IMR-90 (cell line): ENCODE measurements at regions of chr2 and their contacts with region 1.

Region 1: GRCh38 chr2:192162392-192163042 is 32.2 kb downstream of the TMEFF2 start:
- DNase-seq: peak; percentile 74
- ATAC-seq: peak; percentile 93
- H3K4me3 ChIP-seq: no peak overlapping the region
- H3K27ac ChIP-seq: no peak overlapping the region
- H3K4me1 ChIP-seq: no peaks in the 10 kb centered on the region
- H3K27me3 ChIP-seq: no peaks in the 10 kb centered on the region
- CTCF ChIP-seq: peak; percentile 92
- POLR2A ChIP-seq: no peak; the same call in 1 of the 2 replicates
- RAD21 ChIP-seq: peak; percentile 95

Region 2: DNA sequence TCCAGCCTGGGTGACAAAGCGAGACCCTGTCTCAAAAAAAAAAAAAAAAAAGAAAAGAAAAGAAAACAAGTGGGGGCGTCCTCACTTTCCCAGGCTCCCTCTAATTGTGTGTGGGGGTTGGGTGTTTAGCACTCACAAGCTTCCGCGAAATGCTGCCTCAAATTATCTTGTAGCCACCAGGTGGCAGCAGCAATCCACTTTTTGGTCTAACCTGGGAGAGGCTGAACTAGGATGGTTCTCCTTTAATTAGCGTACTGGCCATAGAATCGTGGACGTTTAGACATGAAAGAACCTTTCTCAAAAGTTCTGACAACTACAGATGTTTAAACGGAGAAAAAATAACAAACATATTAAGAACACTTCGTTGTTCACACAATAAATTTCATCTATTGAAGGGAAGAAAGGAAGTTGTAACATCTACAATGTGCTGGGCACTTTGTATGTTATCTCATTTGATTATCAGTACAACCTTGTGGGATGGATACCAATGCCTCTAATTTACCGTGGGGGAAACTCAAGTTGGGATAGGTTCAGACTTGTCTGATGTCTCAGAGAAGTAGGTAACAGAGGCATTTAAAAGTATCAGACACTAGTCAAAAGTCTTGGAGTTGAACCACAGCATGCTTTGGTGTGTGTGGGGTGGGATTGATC is 607.3 kb before region 1 on chr2:
- CTCF ChIA-PET with region 1: interaction called, 3 read pairs
- POLR2A ChIA-PET with region 1: no interaction called
- dilution Hi-C with region 1: no loop called
- in situ Hi-C with region 1: no loop called
- intact Hi-C with region 1: loop called (anchors 1 kb)
- DNase-seq: peak; percentile 74
- ATAC-seq: peak; percentile 93
- H3K4me3 ChIP-seq: no peak overlapping the region
- H3K27ac ChIP-seq: no peak overlapping the region
- H3K4me1 ChIP-seq: no peaks in the 10 kb centered on the region
- H3K27me3 ChIP-seq: peaks cover 3% of the 10 kb centered on the region; the same call in 1 of the 2 replicates
- CTCF ChIP-seq: peak; percentile 86
- POLR2A ChIP-seq: no peak
- RAD21 ChIP-seq: peak; percentile 90

Region 3: GRCh38 chr2:191800874-191801273 is 361.6 kb before region 1 on chr2:
- CTCF ChIA-PET with region 1: interaction called, 11 read pairs
- POLR2A ChIA-PET with region 1: no interaction called
- dilution Hi-C with region 1: no loop called
- in situ Hi-C with region 1: no loop called
- intact Hi-C with region 1: no loop called
- DNase-seq: peak; percentile 20
- ATAC-seq: no peak
- H3K4me3 ChIP-seq: no peak overlapping the region
- H3K27ac ChIP-seq: no peak overlapping the region
- H3K4me1 ChIP-seq: no peaks in the 10 kb centered on the region
- H3K27me3 ChIP-seq: peaks cover 2% of the 10 kb centered on the region; the same call in 1 of the 2 replicates
- CTCF ChIP-seq: no peak
- POLR2A ChIP-seq: no peak
- RAD21 ChIP-seq: no peak

Region 4: DNA sequence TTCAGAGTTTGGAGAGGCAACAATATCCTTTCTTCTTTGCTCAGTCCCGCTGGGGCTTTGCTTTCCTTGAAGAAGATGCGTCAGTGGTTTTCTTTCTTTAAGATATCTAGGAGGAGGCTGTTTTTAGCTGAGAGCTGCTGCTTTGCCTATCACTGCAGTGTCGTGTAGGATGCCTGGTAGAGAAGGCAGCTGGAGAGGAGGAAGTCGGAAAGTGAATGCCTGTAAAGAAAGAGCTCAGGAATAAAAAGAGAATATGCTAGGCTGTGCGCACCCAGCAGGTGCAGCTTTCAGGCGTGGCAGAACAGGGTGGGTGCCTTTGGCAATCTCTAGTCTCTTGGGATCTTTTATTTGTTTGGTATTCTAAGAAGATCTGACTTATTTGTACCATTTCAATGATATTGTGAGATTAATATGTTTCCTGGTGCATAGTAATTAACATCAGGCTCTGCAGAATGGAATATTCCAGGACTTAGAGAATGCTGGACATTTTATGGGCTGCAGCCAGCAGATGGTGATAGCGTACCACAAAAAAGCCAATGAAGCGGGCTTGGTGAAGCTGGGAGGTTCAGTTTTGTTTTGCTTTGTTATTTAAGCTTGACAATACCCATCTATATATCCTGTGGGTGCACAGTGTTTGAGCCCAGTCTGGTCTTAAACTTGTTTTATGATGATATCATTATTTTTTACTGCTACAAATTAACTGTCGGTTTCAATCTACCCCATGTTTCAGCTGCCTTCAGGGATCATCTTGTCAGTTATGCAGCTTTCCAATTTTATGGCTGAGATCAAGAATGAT is 350.5 kb before region 1 on chr2:
- CTCF ChIA-PET with region 1: interaction called, 75 read pairs
- POLR2A ChIA-PET with region 1: interaction called, 7 read pairs
- dilution Hi-C with region 1: no loop called
- in situ Hi-C with region 1: loop called (anchors 5 kb)
- intact Hi-C with region 1: loop called (anchors 1 kb)
- DNase-seq: peak; percentile 69
- ATAC-seq: peak; percentile 97
- H3K4me3 ChIP-seq: no peak overlapping the region
- H3K27ac ChIP-seq: no peak overlapping the region
- H3K4me1 ChIP-seq: no peaks in the 10 kb centered on the region
- H3K27me3 ChIP-seq: no peaks in the 10 kb centered on the region
- CTCF ChIP-seq: peak; percentile 95
- POLR2A ChIP-seq: 0 out of 2 replicates have a peak, but pooled peaks have one; percentile 30
- RAD21 ChIP-seq: peak; percentile 97

Region 5: DNA sequence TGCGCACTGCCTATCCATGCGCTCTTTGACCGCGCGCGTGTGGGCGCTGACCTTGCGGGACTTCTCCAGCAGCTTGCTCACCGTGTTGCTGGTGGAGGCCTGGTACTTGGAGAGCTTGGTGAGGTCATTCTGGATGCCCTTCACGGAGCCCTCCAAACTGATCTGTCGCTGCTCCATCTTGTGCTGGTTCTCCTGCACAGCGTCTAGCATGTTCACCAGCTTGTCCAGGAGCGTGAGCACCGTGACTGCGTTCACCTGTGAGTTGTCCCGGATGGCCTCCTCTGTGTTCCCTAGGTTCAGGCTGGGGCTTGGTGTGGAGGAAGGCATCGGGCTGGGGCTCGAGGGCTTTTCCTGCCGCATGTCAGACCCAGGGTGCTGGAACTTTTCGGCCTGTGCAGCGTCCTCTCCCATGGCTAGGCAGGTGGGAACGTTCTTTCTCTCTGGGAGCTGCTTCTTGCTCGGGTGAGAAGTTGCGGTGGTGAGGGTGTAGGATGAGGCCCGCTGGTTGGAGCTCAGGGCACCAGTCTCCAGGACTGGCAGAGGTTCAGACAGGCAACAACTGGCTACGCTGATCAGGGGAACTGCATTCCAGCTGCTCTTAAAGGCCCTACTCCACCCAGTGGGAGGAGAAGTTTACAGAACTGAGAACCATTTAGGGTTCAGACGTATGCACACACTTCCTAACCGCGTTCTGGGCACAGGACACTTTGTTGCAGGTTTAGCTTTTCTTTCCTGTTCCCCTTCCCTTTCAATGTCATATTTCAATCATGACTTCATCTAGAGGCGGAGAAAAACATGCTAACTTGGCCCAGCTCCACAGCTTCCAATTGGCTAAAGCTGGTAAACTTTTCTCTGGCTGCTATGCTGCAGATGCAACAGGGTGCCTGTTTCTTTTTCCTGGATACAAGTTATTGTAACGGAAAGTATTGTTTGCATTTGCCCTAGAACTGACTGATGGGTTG is 315.7 kb before region 1 on chr2 and contains the start of gene CAVIN2:
- CTCF ChIA-PET with region 1: interaction called, 13 read pairs
- POLR2A ChIA-PET with region 1: no interaction called
- dilution Hi-C with region 1: no loop called
- in situ Hi-C with region 1: no loop called
- intact Hi-C with region 1: no loop called
- DNase-seq: peak; percentile 90
- ATAC-seq: peak; percentile 89
- H3K4me3 ChIP-seq: peak within 1 kb of the TSS; percentile 33
- H3K27ac ChIP-seq: peak within 1 kb of the TSS; percentile 87
- H3K4me1 ChIP-seq: peaks cover 17% of the 10 kb centered on the region
- H3K27me3 ChIP-seq: no peaks in the 10 kb centered on the region
- CTCF ChIP-seq: no peak
- POLR2A ChIP-seq: no peak
- RAD21 ChIP-seq: peak; percentile 15; the same call in 1 of the 2 replicates
- total RNA-seq, gene CAVIN2: 11.5 and 12.5 TPM in 2 replicates

Region 6: DNA sequence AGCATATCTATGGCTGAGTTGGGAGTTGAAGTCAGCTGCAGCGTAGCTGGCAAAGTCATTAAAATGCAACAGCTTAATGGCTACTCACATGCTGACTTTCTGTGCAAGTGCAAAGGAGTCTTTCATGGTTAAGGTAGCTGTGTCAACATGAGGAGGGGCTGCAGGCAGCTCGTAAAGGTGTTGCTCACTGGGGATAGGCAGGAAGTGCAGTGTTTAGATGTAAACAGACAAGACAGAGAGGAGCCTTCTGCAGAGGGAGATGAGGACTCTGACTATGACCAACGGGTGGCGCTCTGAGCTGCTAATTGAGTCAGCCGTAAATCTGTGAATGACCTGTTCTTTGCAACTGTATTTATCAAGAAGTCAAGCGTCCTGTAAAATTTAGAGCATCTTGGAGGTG is 293.3 kb before region 1 on chr2:
- CTCF ChIA-PET with region 1: interaction called, 15 read pairs
- POLR2A ChIA-PET with region 1: no interaction called
- dilution Hi-C with region 1: no loop called
- in situ Hi-C with region 1: no loop called
- intact Hi-C with region 1: loop called (anchors 2 kb)
- DNase-seq: peak; percentile 30
- ATAC-seq: no peak
- H3K4me3 ChIP-seq: no peak overlapping the region
- H3K27ac ChIP-seq: no peak overlapping the region
- H3K4me1 ChIP-seq: peaks cover 22% of the 10 kb centered on the region
- H3K27me3 ChIP-seq: no peaks in the 10 kb centered on the region
- CTCF ChIP-seq: peak; percentile 41
- POLR2A ChIP-seq: no peak
- RAD21 ChIP-seq: peak; percentile 50

Region 7: GRCh38 chr2:192010073-192010472 is 152.4 kb before region 1 on chr2:
- CTCF ChIA-PET with region 1: interaction called, 4 read pairs
- POLR2A ChIA-PET with region 1: no interaction called
- dilution Hi-C with region 1: no loop called
- in situ Hi-C with region 1: no loop called
- intact Hi-C with region 1: loop called (anchors 5 kb)
- DNase-seq: peak; percentile 18
- ATAC-seq: peak; percentile 16; the same call in 1 of the 2 replicates
- H3K4me3 ChIP-seq: no peak overlapping the region
- H3K27ac ChIP-seq: peak overlapping the region; percentile 93
- H3K4me1 ChIP-seq: peaks cover 18% of the 10 kb centered on the region
- H3K27me3 ChIP-seq: no peaks in the 10 kb centered on the region
- CTCF ChIP-seq: no peak
- POLR2A ChIP-seq: no peak
- RAD21 ChIP-seq: no peak

Region 8: DNA sequence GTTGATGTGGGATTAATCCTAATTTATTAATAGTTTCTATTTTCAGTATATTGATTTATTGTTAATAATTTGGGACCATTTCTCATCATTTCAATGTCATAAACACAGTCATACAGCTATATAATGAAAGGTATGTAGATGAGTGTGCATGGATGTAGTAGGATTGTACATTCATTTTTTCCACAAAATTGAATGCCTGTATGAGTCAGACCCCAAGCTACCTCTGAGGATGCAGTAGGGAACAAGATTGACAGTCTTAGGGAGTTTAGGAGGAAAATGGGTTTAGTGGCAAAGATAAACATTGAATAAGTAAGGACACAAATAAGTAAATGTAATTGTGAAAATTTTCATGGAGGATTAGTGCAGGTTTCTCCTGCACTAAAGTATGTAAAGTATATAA is 46.3 kb after region 1 on chr2:
- CTCF ChIA-PET with region 1: no interaction called
- POLR2A ChIA-PET with region 1: no interaction called
- dilution Hi-C with region 1: no loop called
- in situ Hi-C with region 1: no loop called
- intact Hi-C with region 1: no loop called
- DNase-seq: peak; percentile 33
- ATAC-seq: no peak
- H3K4me3 ChIP-seq: no peak overlapping the region
- H3K27ac ChIP-seq: no peak overlapping the region
- H3K4me1 ChIP-seq: no peaks in the 10 kb centered on the region
- H3K27me3 ChIP-seq: no peaks in the 10 kb centered on the region
- CTCF ChIP-seq: no peak
- POLR2A ChIP-seq: no peak
- RAD21 ChIP-seq: no peak

Region 9: DNA sequence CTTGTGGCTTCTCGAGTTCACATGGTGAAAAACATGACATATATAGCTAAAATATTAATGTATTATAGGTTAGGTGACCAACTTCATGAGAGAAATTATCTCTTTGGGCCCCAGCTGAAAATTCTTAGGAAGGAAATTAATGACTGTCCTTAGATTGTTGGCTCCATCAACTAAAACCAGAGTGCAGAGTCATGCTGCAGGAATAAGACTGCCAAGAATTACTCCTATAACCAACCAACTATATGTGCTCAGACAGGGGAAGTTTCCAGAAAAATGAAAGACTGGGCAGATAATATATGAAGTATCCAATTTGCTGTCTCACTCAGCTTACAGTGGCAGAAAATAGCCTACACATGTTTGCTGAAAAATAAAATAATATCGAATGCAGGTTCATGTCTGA is 103.2 kb after region 1 on chr2:
- CTCF ChIA-PET with region 1: no interaction called
- POLR2A ChIA-PET with region 1: no interaction called
- dilution Hi-C with region 1: no loop called
- in situ Hi-C with region 1: no loop called
- intact Hi-C with region 1: no loop called
- DNase-seq: peak; percentile 34
- ATAC-seq: peak; percentile 49; the same call in 1 of the 2 replicates
- H3K4me3 ChIP-seq: no peak overlapping the region
- H3K27ac ChIP-seq: no peak overlapping the region
- H3K4me1 ChIP-seq: peaks cover 5% of the 10 kb centered on the region
- H3K27me3 ChIP-seq: no peaks in the 10 kb centered on the region
- CTCF ChIP-seq: no peak
- POLR2A ChIP-seq: no peak
- RAD21 ChIP-seq: no peak

Region 10: DNA sequence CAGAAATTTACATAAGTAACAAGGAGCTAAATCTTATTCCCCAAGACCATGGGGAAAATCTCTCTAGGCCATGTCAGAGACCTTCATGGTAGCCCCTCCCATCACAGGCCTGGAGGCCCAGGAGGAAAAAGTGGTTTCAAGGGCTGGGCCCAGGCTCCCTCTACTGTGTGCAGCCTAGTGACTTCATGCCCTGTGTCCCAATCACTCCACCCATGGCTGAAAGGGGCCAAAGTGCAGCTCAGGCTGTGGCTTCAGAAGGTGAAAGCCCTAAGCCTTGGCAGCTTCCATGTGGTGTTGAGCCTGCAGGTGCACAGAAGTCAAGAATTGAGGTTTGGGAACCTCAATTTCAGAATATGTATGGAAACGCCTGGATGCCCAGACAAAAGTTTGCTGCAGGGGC is 1881.8 kb after region 1 on chr2:
- CTCF ChIA-PET with region 1: no interaction called
- POLR2A ChIA-PET with region 1: no interaction called
- dilution Hi-C with region 1: no loop called
- in situ Hi-C with region 1: no loop called
- intact Hi-C with region 1: no loop called
- DNase-seq: no peak
- ATAC-seq: no peak
- H3K4me3 ChIP-seq: no peak overlapping the region
- H3K27ac ChIP-seq: no peak overlapping the region
- H3K4me1 ChIP-seq: no peaks in the 10 kb centered on the region
- H3K27me3 ChIP-seq: no peaks in the 10 kb centered on the region
- CTCF ChIP-seq: no peak
- POLR2A ChIP-seq: no peak
- RAD21 ChIP-seq: no peak